GM10248 (cell line): ENCODE measurements at regions of chr7 and their contacts with region 1.

Region 1: GRCh38 chr7:100469227-100470044 is 5.4 kb upstream of the SPACDR start:
- DNase-seq: peak; percentile 89
- CTCF ChIP-seq: peak; percentile 98

Region 2: DNA sequence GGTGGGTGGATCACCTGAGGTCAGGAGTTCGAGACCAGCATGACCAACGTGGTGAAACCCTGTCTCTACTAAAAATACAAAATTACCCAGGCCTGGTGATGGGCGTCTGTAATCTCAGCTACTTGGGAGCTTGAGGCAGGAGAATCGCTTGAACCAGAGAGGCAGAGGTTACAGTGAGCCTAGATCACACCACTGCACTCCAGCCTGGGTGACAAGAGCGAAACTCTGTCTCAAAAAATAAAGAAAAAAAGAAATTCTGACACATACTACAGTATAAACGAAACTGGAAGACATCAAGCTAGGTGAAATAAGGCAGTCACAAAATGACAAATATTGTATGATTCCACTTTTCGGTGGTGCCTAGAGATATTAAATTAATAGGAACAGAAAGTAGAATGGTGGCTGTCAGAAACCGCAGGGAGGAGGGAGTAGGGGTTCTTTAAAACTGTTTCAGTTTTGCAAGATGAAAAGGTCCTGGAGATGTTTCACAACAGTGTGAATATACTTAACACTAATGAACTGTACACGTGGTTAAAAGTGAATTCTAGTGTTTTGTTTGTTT is 72.9 kb before region 1 on chr7:
- CTCF ChIA-PET with region 1: no interaction called
- POLR2A ChIA-PET with region 1: no interaction called
- DNase-seq: peak; percentile 76
- CTCF ChIP-seq: no peak

Region 3: GRCh38 chr7:100449190-100449795 is 20.1 kb before region 1 on chr7:
- CTCF ChIA-PET with region 1: interaction called, 46 read pairs
- POLR2A ChIA-PET with region 1: interaction called, 4 read pairs
- DNase-seq: no peak
- CTCF ChIP-seq: no peak

Region 4: DNA sequence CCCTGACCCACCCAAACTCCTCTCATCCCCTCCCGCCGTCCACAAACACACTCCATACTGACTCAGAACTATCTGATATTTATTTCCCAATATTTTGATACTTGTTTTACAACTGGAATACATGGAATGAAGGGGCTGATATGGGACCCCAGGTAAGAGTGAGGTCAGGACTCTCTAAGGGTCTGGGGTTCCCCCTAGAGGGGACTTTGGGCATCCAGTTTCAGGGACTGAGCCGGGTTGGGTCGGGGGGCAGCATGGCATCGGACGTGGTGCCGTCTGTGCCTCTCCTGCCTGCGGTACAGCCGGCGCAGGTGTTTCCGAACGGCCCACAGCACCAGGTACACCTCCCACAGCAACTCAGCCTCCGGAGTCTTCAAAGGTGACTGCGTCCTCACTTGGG is 12.9 kb before region 1 on chr7:
- CTCF ChIA-PET with region 1: interaction called, 46 read pairs
- POLR2A ChIA-PET with region 1: interaction called, 4 read pairs
- DNase-seq: no peak
- CTCF ChIP-seq: no peak

Region 5: GRCh38 chr7:100545360-100546128 is 76.1 kb after region 1 on chr7:
- CTCF ChIA-PET with region 1: interaction called, 14 read pairs
- POLR2A ChIA-PET with region 1: no interaction called
- DNase-seq: peak; percentile 61
- CTCF ChIP-seq: no peak

Region 6: GRCh38 chr7:100611974-100612729 is 142.7 kb after region 1 on chr7 and contains the start of gene MOSPD3:
- CTCF ChIA-PET with region 1: no interaction called
- POLR2A ChIA-PET with region 1: no interaction called
- DNase-seq: peak; percentile 99
- CTCF ChIP-seq: no peak

Region 7: DNA sequence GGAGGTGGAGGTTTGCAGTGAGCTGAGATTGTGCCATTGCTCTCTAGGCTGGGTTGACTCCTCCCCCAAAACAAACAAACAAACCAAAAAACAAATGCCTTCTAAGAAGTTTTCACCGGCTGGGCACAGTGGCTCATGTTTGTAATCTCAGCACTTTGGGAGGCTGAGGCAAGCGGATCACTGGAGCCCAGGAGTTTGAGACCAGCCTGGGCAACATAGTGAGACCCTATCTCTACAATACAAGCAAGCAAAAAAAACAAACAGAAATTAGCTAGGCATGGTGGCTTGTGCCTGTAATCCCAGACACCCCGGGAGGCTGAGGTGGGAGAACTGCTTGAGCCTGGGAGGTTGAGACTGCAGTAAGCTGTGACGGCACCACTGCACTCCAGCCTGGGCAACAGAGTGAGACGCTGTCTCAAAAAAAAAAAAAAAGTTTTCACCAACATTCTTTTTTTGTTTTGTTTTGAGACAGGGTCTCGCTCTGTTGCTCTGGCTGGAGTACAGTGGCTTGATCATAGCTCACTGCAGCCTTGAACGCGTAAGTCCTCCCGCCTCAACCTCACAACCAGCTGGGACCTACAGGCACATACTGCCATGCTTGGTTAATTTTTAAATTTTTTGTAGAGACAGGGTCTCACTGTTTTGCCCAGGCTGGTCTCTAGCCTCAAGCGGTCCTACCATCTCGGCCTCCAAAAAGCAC is 262.7 kb after region 1 on chr7:
- CTCF ChIA-PET with region 1: no interaction called
- POLR2A ChIA-PET with region 1: no interaction called
- DNase-seq: no peak
- CTCF ChIP-seq: no peak